ENCODE measurements at regions of chr7 and their contacts with region 1.

Region 1: DNA sequence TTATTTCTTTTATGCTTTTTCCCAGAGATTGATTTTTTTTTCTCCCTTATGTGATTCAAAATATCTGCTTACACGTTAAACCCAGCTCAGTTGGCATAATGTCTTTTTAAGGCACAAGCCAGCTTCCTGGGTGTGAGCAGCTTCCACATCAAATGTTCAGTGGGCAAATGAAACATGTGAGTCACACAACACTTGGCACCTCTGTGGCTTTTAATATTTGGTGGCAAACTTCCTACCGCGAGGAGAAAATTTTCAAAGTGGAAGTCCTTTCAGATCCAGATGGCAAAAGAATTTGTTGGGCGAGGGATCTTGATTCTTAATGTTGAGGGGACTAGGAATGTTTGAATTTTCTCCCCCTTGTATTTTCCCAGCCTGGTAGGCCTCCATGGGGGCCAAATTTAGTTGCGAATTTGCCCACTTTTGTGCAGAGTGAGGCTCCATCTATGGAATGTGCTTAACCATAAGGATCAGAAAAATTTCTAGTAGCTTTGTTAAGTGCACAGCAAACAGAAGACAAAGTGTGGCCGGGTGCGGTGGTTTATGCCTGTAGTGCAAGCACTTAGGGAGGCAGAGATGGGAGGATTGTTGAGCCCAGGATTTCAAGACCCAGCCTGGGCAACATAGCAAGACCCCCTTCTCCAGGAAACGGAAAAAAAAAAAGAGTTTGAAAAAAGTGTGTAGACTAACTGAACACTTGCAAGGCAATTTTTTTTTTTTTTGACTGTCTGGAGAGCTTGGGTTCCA is 31.0 kb downstream of the CUX1 start:
- DNase-seq: peak; percentile 43
- ATAC-seq: peak; percentile 42
- H3K4me3 ChIP-seq: no peak overlapping the region
- H3K27ac ChIP-seq: no peak overlapping the region
- H3K4me1 ChIP-seq: peaks cover 3% of the 10 kb centered on the region; the same call in 1 of the 2 replicates
- H3K27me3 ChIP-seq: no peaks in the 10 kb centered on the region
- CTCF ChIP-seq: no peak

Region 2: DNA sequence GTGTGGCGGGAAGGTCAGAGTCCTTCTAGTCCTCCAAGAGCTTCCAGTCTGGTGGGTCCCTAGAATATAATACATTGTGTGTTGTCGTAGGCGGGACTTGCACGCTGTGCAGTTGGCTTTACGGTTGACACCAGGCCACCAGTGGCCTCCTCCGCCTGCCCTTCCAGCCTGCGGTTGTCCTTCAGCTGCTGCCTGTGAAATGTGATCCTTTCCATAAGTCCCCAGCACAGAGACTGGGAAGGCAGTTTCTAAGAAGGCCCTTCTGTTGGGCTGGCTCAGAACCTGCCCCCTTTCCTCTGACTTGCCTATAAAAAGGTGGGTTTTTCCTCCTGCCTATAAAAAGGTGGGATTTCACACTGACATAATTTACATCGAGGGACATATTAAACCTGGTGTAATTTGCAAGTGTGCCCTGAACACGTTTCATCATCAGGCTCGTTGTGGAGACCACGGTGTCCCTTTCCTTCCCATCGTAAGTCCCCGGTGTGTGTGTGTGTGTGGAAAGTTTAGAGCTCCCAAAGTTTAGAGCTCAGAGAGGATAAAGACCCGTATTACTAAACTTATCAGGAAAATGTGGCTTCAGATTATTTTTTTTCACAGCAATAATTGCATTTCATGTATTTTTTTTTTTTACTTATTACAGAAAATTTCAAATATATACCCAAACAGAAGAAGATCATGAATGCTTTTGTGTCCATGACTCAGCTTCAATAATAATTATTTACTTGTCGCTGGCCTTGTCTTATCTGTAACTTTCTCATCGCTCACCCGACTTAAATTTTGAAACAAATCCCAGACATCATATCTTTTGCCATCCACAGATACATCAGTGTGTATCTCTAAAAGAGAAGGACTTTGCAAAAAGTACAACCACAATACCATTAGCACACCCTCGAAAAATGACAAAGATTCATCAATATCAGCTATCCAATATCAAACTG is 14.2 kb after region 1 on chr7:
- CTCF ChIA-PET with region 1: no interaction called
- POLR2A ChIA-PET with region 1: no interaction called
- intact Hi-C with region 1: no loop called
- DNase-seq: no peak
- ATAC-seq: no peak
- H3K4me3 ChIP-seq: no peak overlapping the region
- H3K27ac ChIP-seq: no peak overlapping the region
- H3K4me1 ChIP-seq: peaks cover 6% of the 10 kb centered on the region; the same call in 1 of the 2 replicates
- H3K27me3 ChIP-seq: no peaks in the 10 kb centered on the region
- CTCF ChIP-seq: no peak

Region 3: GRCh38 chr7:102064361-102065025 is 216.1 kb after region 1 on chr7:
- CTCF ChIA-PET with region 1: interaction called, 11 read pairs
- POLR2A ChIA-PET with region 1: no interaction called
- intact Hi-C with region 1: no loop called
- DNase-seq: peak; percentile 60
- ATAC-seq: peak; percentile 68
- H3K4me3 ChIP-seq: no peak overlapping the region
- H3K27ac ChIP-seq: peak overlapping the region; percentile 96
- H3K4me1 ChIP-seq: peaks cover 18% of the 10 kb centered on the region
- H3K27me3 ChIP-seq: no peaks in the 10 kb centered on the region
- CTCF ChIP-seq: no peak

Measured in PC-3 (cell line).